ENCODE measurements at regions of chr15 and their contacts with region 1.

Region 1: GRCh38 chr15:72375847-72376581 is at the start of gene HEXA:
- DNase-seq: peak; percentile 93
- H3K4me3 ChIP-seq: peak within 1 kb of the TSS; percentile 59 to 85
- H3K27ac ChIP-seq: peak within 1 kb of the TSS; percentile 84 to 88
- H3K4me1 ChIP-seq: no peaks in the 10 kb centered on the region
- H3K27me3 ChIP-seq: no peaks in the 10 kb centered on the region
- CTCF ChIP-seq: peak in 2 of 4 experiments; percentile 18 to 29
- POLR2A ChIP-seq: peak; percentile 70
- total RNA-seq, gene HEXA: 78.1 to 176 TPM

Region 2: DNA sequence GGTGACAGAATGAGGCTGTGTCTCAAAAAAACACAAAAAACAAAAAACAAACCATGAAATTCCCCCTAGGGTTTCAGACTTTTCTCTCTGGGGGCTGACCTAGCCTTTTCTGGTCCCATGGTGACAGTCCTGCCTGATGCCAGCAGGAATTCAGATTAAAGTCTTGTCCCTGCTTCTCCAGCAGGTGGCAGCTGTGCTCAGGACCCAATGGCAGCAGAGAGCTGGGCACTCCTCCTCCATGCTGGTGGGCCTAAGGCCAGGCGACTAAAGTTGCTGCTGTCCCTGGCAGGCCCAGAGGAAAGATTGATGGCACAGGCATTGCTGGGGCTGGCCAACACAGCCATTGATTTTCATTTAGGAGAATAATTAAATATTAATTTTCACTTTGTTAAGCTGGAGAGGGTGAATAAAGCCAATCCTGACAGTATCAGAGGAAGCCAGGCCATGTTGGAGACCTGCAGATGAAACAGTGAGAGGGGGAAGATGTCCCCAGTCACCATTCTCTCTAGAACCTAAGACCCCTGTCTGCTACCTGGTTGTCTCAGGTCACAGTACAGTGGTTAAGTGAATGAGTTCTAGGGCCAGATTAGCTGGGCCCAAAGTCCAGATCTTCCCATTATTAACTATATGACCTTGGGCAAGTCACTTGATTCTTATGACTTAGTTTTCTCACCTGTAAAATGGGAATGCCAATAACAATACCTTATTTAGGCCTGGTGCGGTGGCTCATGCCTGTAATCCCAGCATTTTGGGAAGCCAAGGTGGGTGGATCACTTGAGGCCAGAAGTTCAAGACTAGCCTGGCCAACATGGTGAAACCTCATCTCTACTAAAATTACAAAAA is 63.2 kb before region 1 on chr15:
- intact Hi-C with region 1: loop called (anchors 10 kb)
- DNase-seq: peak; percentile 52
- H3K4me3 ChIP-seq: no peak overlapping the region
- H3K27ac ChIP-seq: no peak overlapping the region
- H3K4me1 ChIP-seq: no peaks in the 10 kb centered on the region
- H3K27me3 ChIP-seq: no peaks in the 10 kb centered on the region
- CTCF ChIP-seq: peak in 3 of 4 experiments; percentile 54 to 78 (median 72)
- POLR2A ChIP-seq: no peak

Region 3: GRCh38 chr15:72473614-72474465 is 97.8 kb after region 1 on chr15 and contains the start of gene ARIH1:
- intact Hi-C with region 1: loop called (anchors 5 kb)
- DNase-seq: peak; percentile 96
- H3K4me3 ChIP-seq: peak within 1 kb of the TSS; percentile 88 to 91
- H3K27ac ChIP-seq: peak within 1 kb of the TSS; percentile 94 to 100
- H3K4me1 ChIP-seq: peaks cover 9% of the 10 kb centered on the region
- H3K27me3 ChIP-seq: no peaks in the 10 kb centered on the region
- CTCF ChIP-seq: peak in 3 of 4 experiments; percentile 6 to 16 (median 12)
- POLR2A ChIP-seq: peak; percentile 99
- total RNA-seq, gene ARIH1: 35.7 to 38.7 TPM

Measured in prostate gland (tissue), 2 donors.